Ascending aorta (tissue), 2 donors: ENCODE measurements at regions of chr7 and their contacts with region 1.

Region 1: DNA sequence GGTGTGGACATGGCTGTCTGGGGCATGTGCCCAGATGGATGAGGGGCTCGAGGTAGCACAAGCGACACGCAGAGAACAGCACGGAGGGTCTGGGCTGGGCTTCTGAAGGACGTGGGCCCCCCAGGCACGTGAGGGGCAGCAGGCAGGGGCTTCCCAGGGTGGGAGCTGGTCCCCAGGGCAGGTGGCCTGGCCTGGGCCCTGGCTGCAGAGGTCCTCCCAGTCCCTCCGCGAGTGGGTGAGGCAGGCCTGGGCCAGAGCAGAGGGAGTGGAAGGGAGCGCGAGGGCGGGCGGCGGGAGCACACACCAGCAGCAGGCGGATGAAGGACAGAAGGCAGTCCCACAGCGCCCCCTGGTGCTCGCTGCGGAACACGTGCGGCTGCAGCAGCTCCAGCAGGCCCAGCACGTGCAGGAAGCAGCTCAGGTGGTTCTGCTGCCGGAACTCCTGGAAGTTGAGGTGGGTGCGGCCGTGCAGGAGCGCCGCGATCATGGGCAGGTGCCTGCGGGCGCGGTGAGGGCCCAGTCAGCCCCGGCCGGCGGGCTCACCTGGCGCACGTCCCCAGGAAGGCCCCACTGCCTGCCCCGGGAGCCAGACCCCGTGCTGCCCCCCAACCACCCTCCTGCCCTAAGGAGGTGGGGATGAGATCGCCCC is 14.7 kb upstream of the MICALL2 start:
- DNase-seq: peak; percentile 47 to 85
- H3K4me3 ChIP-seq: no peak overlapping the region
- H3K27ac ChIP-seq: no peak overlapping the region
- H3K4me1 ChIP-seq: no peaks in the 10 kb centered on the region
- H3K27me3 ChIP-seq: no peaks in the 10 kb centered on the region
- CTCF ChIP-seq: peak; percentile 85 to 94 (median 91)

Region 2: DNA sequence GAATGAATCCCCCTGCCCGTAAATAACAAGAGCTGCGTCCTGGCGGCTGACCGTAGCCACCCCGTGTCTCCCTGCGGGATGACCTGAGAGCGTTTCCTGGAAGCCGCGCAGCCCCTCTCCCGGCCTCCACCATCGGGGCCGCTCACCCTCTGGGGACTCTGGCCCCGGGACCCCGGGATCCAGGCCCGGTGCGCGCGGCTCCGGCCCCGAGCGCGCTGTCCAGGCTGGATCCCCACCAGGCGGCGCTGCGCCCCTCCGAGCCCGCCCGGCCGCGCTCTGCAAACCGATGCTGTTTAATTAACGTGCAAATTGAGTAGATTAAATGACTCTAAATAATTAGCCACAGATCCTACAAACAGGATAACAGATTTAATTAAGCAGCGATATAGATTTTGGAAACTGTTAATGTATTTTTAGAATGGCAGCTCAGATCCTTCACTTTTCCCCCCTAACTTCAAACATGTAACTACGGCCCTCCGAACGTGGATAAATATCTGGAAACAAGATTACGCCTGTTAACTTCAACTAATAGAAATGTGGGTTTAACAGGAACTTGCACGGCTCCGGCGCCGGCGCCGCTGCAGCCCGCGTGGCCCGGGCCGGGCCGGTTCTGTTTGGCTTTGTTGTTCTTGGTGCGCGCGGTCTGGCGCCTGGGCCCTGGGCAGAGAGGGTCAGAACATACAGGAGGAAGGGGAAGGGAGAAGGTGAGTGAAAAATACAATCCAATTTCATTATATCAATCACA is 248.4 kb before region 1 on chr7:
- intact Hi-C with region 1: loop called (anchors 2 kb)
- DNase-seq: no peak
- H3K4me3 ChIP-seq: no peak overlapping the region
- H3K27ac ChIP-seq: no peak overlapping the region
- H3K4me1 ChIP-seq: peaks cover 0 to 6% of the 10 kb centered on the region in 2 donors
- H3K27me3 ChIP-seq: peaks cover 50% of the 10 kb centered on the region
- CTCF ChIP-seq: peak; percentile 51 to 74 (median 55)

Region 3: GRCh38 chr7:1432411-1433082 is 41.4 kb before region 1 on chr7:
- intact Hi-C with region 1: loop called (anchors 2 kb)
- DNase-seq: peak in 1 of 2 donors; percentile 73
- H3K4me3 ChIP-seq: no peak overlapping the region
- H3K27ac ChIP-seq: no peak overlapping the region
- H3K4me1 ChIP-seq: no peaks in the 10 kb centered on the region
- H3K27me3 ChIP-seq: no peaks in the 10 kb centered on the region
- CTCF ChIP-seq: peak; percentile 86 to 99 (median 98)